ENCODE measurements at regions of chr22 and their contacts with region 1.

Region 1: GRCh38 chr22:21612865-21613265 is 17.0 kb downstream of the YDJC start:
- DNase-seq: no peak
- ATAC-seq: no peak
- H3K4me3 ChIP-seq: no peak overlapping the region
- H3K4me3 Mint-ChIP-seq: no peak overlapping the region
- H3K27ac ChIP-seq: no peak overlapping the region
- H3K27ac Mint-ChIP-seq: no peak overlapping the region
- H3K4me1 ChIP-seq: peaks cover 0 to under 1% of the 10 kb centered on the region in 2 donors
- H3K4me1 Mint-ChIP-seq: peaks cover 14 to 39% (median 26%) of the 10 kb centered on the region in 7 donors
- H3K27me3 ChIP-seq: no peaks in the 10 kb centered on the region
- H3K27me3 Mint-ChIP-seq: no peaks in the 10 kb centered on the region

Region 2: GRCh38 chr22:21657361-21658032 is 44.6 kb after region 1 on chr22:
- CTCF ChIA-PET with region 1: no interaction called
- POLR2A ChIA-PET with region 1: no interaction called
- intact Hi-C with region 1: no loop called
- DNase-seq: peak; percentile 61 to 90 (median 67)
- ATAC-seq: peak; percentile 96
- H3K4me3 ChIP-seq: peak overlapping the region; percentile 56
- H3K4me3 Mint-ChIP-seq: peak overlapping the region; percentile 75 to 94 (median 86)
- H3K27ac ChIP-seq: peak overlapping the region; percentile 62
- H3K27ac Mint-ChIP-seq: peak overlapping the region in 5 of 9 donors; percentile 38 to 91 (median 68)
- H3K4me1 ChIP-seq: peaks cover 0 to 14% of the 10 kb centered on the region in 2 donors
- H3K4me1 Mint-ChIP-seq: peaks cover 11 to 26% (median 13%) of the 10 kb centered on the region in 7 donors
- H3K27me3 ChIP-seq: no peaks in the 10 kb centered on the region
- H3K27me3 Mint-ChIP-seq: no peaks in the 10 kb centered on the region

Region 3: GRCh38 chr22:21677606-21678443 is 65.0 kb after region 1 on chr22:
- CTCF ChIA-PET with region 1: no interaction called
- POLR2A ChIA-PET with region 1: no interaction called
- intact Hi-C with region 1: loop called in 1 of 2 experiments (anchors 10 kb)
- DNase-seq: no peak
- ATAC-seq: no peak
- H3K4me3 ChIP-seq: no peak overlapping the region
- H3K4me3 Mint-ChIP-seq: no peak overlapping the region
- H3K27ac ChIP-seq: no peak overlapping the region
- H3K27ac Mint-ChIP-seq: peak overlapping the region in 1 of 9 donors; percentile 14
- H3K4me1 ChIP-seq: no peaks in the 10 kb centered on the region
- H3K4me1 Mint-ChIP-seq: peaks cover 0 to 12% (median 0%) of the 10 kb centered on the region in 7 donors
- H3K27me3 ChIP-seq: no peaks in the 10 kb centered on the region
- H3K27me3 Mint-ChIP-seq: no peaks in the 10 kb centered on the region

Region 4: GRCh38 chr22:21816787-21817496 is 204.1 kb after region 1 on chr22:
- CTCF ChIA-PET with region 1: no interaction called
- POLR2A ChIA-PET with region 1: no interaction called
- intact Hi-C with region 1: no loop called
- DNase-seq: peak in 8 of 9 donors; percentile 16 to 83 (median 74)
- ATAC-seq: peak; percentile 95
- H3K4me3 ChIP-seq: peak overlapping the region; percentile 0
- H3K4me3 Mint-ChIP-seq: peak overlapping the region; percentile 73 to 86 (median 76)
- H3K27ac ChIP-seq: peak overlapping the region; percentile 68
- H3K27ac Mint-ChIP-seq: peak overlapping the region; percentile 92 to 98 (median 97)
- H3K4me1 ChIP-seq: peaks cover 39 to 40% of the 10 kb centered on the region in 2 donors
- H3K4me1 Mint-ChIP-seq: peaks cover 44 to 82% (median 65%) of the 10 kb centered on the region in 7 donors
- H3K27me3 ChIP-seq: no peaks in the 10 kb centered on the region
- H3K27me3 Mint-ChIP-seq: no peaks in the 10 kb centered on the region